ENCODE measurements at regions of chr11 and their contacts with region 1.

Region 1: GRCh38 chr11:17287058-17287457 is 10.5 kb downstream of the NUCB2 start:
- DNase-seq: peak in 1 of 9 donors; percentile 7
- ATAC-seq: no peak
- H3K4me3 ChIP-seq: no peak overlapping the region
- H3K4me3 Mint-ChIP-seq: peak overlapping the region in 9 of 10 donors; percentile 11 to 69 (median 51)
- H3K27ac ChIP-seq: peak overlapping the region; percentile 63
- H3K27ac Mint-ChIP-seq: peak overlapping the region; percentile 52 to 94 (median 88)
- H3K4me1 ChIP-seq: peaks cover 37 to 39% of the 10 kb centered on the region in 2 donors
- H3K4me1 Mint-ChIP-seq: peaks cover 33 to 73% (median 56%) of the 10 kb centered on the region in 7 donors
- H3K27me3 ChIP-seq: no peaks in the 10 kb centered on the region
- H3K27me3 Mint-ChIP-seq: no peaks in the 10 kb centered on the region

Region 2: DNA sequence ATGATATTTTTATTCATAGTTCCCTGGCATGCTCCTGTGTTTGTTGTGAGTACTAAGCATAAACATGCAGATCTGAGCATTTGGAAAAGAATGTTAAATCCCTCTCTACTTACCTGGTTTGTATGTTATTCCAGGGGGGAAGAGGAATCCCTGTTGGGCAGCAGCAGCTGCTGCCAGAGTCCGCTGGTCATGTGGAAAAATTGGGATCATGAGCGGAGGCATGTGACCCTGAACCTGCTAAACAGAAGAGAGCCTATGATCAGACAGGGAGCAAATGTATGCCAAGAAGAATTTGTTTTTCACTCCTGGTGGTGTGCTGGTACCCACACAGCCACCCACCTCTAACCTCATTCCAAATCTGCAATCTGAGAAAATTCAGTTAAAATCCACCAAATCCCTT is 1175.4 kb before region 1 on chr11:
- CTCF ChIA-PET with region 1: no interaction called
- POLR2A ChIA-PET with region 1: no interaction called
- intact Hi-C with region 1: no loop called
- DNase-seq: no peak
- ATAC-seq: no peak
- H3K4me3 ChIP-seq: no peak overlapping the region
- H3K4me3 Mint-ChIP-seq: no peak overlapping the region
- H3K27ac ChIP-seq: no peak overlapping the region
- H3K27ac Mint-ChIP-seq: no peak overlapping the region
- H3K4me1 ChIP-seq: no peaks in the 10 kb centered on the region
- H3K4me1 Mint-ChIP-seq: no peaks in the 10 kb centered on the region
- H3K27me3 ChIP-seq: no peaks in the 10 kb centered on the region
- H3K27me3 Mint-ChIP-seq: no peaks in the 10 kb centered on the region

Region 3: DNA sequence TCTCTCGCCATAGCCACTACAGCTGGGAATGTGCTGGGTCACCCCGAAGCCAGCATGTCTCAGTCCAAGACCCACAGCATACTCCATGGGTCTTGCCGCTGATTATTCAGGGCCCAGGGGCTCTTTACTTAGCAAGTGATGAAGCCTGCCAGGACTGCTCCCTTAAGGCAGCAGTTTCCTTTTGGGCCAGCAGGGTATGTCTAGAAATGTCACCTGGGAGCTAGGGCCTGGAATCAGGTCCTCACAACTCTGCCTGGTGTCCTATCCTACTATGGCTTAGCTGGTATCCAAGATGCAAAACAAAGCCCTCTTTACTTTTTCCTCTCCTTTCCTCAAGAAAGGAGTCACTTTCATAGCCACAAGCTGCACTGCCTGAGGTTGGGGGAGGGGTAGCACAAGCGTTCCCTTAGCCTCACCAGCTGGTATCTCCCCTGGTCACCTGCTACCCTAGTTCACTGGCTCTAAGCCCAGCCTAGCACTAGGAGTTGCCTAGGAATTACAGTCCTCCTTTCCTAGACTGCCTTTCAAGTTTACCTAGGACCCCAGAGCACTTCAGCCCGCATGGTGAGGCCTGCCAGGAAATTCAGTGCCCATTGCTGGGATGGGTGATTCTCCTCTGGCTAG is 41.9 kb after region 1 on chr11:
- CTCF ChIA-PET with region 1: interaction called, 4 read pairs
- POLR2A ChIA-PET with region 1: no interaction called
- intact Hi-C with region 1: loop called in 1 of 2 experiments (anchors 5 kb)
- DNase-seq: no peak
- ATAC-seq: no peak
- H3K4me3 ChIP-seq: no peak overlapping the region
- H3K4me3 Mint-ChIP-seq: no peak overlapping the region
- H3K27ac ChIP-seq: no peak overlapping the region
- H3K27ac Mint-ChIP-seq: peak overlapping the region in 5 of 9 donors; percentile 21 to 71 (median 62)
- H3K4me1 ChIP-seq: peaks cover 9 to 10% of the 10 kb centered on the region in 2 donors
- H3K4me1 Mint-ChIP-seq: peaks cover 8 to 35% (median 25%) of the 10 kb centered on the region in 7 donors
- H3K27me3 ChIP-seq: no peaks in the 10 kb centered on the region
- H3K27me3 Mint-ChIP-seq: no peaks in the 10 kb centered on the region